GM12878 (cell line): ENCODE measurements at regions of chr5 and their contacts with region 1.

Region 1: GRCh38 chr5:170434966-170435605 is 45.9 kb upstream of the KCNMB1 start:
- DNase-seq: no peak
- ATAC-seq: peak; percentile 93
- H3K4me3 ChIP-seq: no peak overlapping the region
- H3K27ac ChIP-seq: no peak overlapping the region
- H3K4me1 ChIP-seq: no peaks in the 10 kb centered on the region
- H3K27me3 ChIP-seq: peaks cover 0 to 2% of the 10 kb centered on the region in 2 experiments; a peak in 3 of 4 replicates
- CTCF ChIP-seq: peak; percentile 78 to 97 (median 94)
- EP300 ChIP-seq: no peak
- POLR2A ChIP-seq: no peak
- RAD21 ChIP-seq: peak; percentile 88

Region 2: GRCh38 chr5:170420780-170421412 is 14.2 kb before region 1 on chr5:
- CTCF ChIA-PET with region 1: interaction called, 44 read pairs
- POLR2A ChIA-PET with region 1: no interaction called
- RAD21 ChIA-PET with region 1: interaction called, 3 read pairs
- SMC1A ChIA-PET with region 1: no interaction called
- in situ Hi-C with region 1: no loop called
- intact Hi-C with region 1: no loop called
- DNase-seq: no peak
- ATAC-seq: peak; percentile 92
- H3K4me3 ChIP-seq: no peak overlapping the region
- H3K27ac ChIP-seq: no peak overlapping the region
- H3K4me1 ChIP-seq: no peaks in the 10 kb centered on the region
- H3K27me3 ChIP-seq: no peaks in the 10 kb centered on the region; a peak in 1 of 4 replicates
- CTCF ChIP-seq: peak; percentile 65 to 73 (median 68)
- EP300 ChIP-seq: no peak
- POLR2A ChIP-seq: no peak
- RAD21 ChIP-seq: peak; percentile 76

Region 3: GRCh38 chr5:170623576-170624181 is 188.6 kb after region 1 on chr5:
- CTCF ChIA-PET with region 1: interaction called, 20 read pairs
- POLR2A ChIA-PET with region 1: no interaction called
- RAD21 ChIA-PET with region 1: interaction called, 3 read pairs
- SMC1A ChIA-PET with region 1: interaction called, 3 read pairs
- in situ Hi-C with region 1: loop called (anchors 5 kb)
- intact Hi-C with region 1: loop called (anchors 1 kb)
- DNase-seq: no peak
- ATAC-seq: peak; percentile 85
- H3K4me3 ChIP-seq: no peak overlapping the region
- H3K27ac ChIP-seq: no peak overlapping the region
- H3K4me1 ChIP-seq: no peaks in the 10 kb centered on the region
- H3K27me3 ChIP-seq: no peaks in the 10 kb centered on the region; a peak in 2 of 4 replicates
- CTCF ChIP-seq: peak; percentile 49 to 51 (median 50)
- EP300 ChIP-seq: no peak
- POLR2A ChIP-seq: no peak
- RAD21 ChIP-seq: peak; percentile 59

Region 4: GRCh38 chr5:170633235-170634081 is 198.4 kb after region 1 on chr5:
- CTCF ChIA-PET with region 1: interaction called, 76 read pairs
- POLR2A ChIA-PET with region 1: no interaction called
- RAD21 ChIA-PET with region 1: interaction called, 8 read pairs
- SMC1A ChIA-PET with region 1: interaction called, 25 read pairs
- in situ Hi-C with region 1: loop called (anchors 5 kb)
- intact Hi-C with region 1: loop called (anchors 1 kb)
- DNase-seq: peak; percentile 20
- ATAC-seq: peak; percentile 23; the same call in 2 of the 3 replicates
- H3K4me3 ChIP-seq: no peak overlapping the region
- H3K27ac ChIP-seq: no peak overlapping the region
- H3K4me1 ChIP-seq: no peaks in the 10 kb centered on the region
- H3K27me3 ChIP-seq: no peaks in the 10 kb centered on the region
- CTCF ChIP-seq: no peak
- EP300 ChIP-seq: no peak
- POLR2A ChIP-seq: no peak
- RAD21 ChIP-seq: no peak